ENCODE measurements at regions of chr15 and their contacts with region 1.

Region 1: DNA sequence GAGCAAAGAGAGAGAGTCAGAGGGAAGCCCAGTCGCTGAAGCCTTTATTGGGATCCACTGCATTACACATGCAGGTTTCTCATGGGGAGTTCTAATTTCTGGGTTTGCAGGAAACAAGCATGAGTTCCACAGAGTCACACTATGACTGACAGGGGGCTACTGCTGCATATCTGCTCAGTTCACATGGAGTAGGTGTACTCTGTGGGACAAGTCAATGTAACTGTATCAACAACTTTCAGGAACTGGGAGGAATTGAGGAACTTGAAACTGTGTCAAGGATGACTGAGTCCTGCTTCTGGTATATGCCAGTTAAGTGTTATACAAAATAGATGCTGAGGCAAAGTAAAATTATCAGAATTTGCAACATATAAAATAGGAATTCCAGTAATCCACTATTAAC is 110.8 kb downstream of the NPAP1 start:
- DNase-seq: no peak
- ATAC-seq: no peak

Region 2: DNA sequence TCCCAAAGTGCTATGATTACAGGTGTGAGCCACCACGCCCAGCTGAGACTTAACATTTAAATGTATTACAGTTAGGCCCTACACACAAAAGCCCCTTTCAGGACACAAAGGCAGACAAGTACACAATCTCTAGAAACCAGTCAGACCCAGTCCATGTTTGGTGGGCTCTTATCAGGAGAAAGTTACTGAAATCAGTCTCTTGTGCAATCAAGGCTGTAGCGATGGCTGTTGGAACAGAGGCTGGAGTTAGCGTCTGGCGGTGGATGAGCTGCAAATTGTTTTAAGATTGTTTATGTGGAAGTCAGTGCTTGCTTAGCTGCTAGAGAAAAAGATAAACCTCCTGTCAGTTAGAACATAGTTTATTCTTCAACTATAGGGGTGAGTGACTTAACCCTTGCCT is 79.0 kb after region 1 on chr15:
- intact Hi-C with region 1: no loop called
- DNase-seq: no peak
- ATAC-seq: no peak

Region 3: GRCh38 chr15:25059698-25060471 is 273.5 kb after region 1 on chr15:
- intact Hi-C with region 1: loop called (anchors 10 kb)
- DNase-seq: peak; percentile 18
- ATAC-seq: no peak